ENCODE measurements at regions of chr16 and their contacts with region 1.

Region 1: GRCh38 chr16:27235055-27235937 is 32.0 kb downstream of the KDM8 start:
- DNase-seq: peak; percentile 87
- ATAC-seq: peak; percentile 71
- H3K4me3 ChIP-seq: no peak overlapping the region
- H3K27ac ChIP-seq: peak overlapping the region; percentile 73
- H3K4me1 ChIP-seq: peaks cover 60% of the 10 kb centered on the region
- H3K27me3 ChIP-seq: no peaks in the 10 kb centered on the region
- CTCF ChIP-seq: peak; percentile 92

Region 2: GRCh38 chr16:27347930-27348685 is 112.8 kb after region 1 on chr16:
- intact Hi-C with region 1: no loop called
- DNase-seq: no peak
- ATAC-seq: peak; percentile 17
- H3K4me3 ChIP-seq: no peak overlapping the region
- H3K27ac ChIP-seq: peak overlapping the region; percentile 9
- H3K4me1 ChIP-seq: peaks cover 3% of the 10 kb centered on the region
- H3K27me3 ChIP-seq: no peaks in the 10 kb centered on the region
- CTCF ChIP-seq: no peak

Region 3: DNA sequence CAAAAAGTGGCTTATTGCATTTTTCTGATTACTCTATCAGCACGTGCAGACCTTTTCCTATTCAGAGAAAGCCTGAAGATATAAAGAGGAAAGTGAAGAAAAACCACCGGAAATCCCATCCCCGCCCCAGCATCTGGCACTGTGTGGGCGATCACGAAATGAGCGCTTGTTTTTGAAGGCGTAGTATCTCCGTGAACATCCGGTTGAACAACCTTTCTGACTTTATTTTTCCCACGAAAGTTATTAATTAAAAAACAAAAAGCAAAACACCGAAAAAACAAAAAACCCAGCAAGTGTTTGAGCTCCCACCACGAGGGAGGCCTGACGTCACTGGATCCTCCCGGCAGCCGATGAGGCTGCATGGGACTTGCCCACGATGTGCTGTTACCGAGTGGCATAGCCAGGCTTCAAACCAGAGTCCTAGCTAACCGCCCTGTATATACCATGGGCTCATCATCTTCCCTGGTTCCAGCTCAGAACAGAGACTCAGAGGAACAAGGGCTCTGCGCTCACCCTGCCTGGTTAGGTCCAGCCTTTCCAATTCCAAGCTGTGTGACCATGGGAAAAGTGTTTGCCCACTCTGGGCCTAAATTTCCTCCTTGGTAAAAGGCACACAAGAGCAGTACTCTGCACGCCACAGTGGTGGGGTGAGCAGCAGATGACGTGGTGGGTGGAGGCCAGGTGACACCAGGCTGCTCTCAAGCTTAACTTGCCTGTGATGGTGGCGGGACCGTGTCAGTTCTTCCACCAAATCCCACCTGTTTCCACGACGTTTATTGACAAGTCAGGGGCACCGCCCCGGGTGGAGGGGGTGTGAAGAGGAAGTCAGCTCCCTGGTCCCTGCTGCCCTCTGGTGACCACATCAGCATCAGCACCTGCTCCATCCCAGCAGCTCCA is 132.4 kb after region 1 on chr16:
- intact Hi-C with region 1: loop called (anchors 10 kb)
- DNase-seq: peak; percentile 89
- ATAC-seq: peak; percentile 86
- H3K4me3 ChIP-seq: peak overlapping the region; percentile 20
- H3K27ac ChIP-seq: peak overlapping the region; percentile 56
- H3K4me1 ChIP-seq: peaks cover 26% of the 10 kb centered on the region
- H3K27me3 ChIP-seq: no peaks in the 10 kb centered on the region
- CTCF ChIP-seq: peak; percentile 86

Measured in upper lobe of right lung (tissue), 1 donor.